ENCODE measurements at regions of chr7 and their contacts with region 1.

Region 1: GRCh38 chr7:123695944-123696677 is 40.4 kb downstream of the LMOD2 start:
- DNase-seq: no peak
- H3K4me3 ChIP-seq: no peak overlapping the region
- H3K27ac ChIP-seq: no peak overlapping the region
- H3K4me1 ChIP-seq: no peaks in the 10 kb centered on the region
- H3K27me3 ChIP-seq: no peaks in the 10 kb centered on the region
- CTCF ChIP-seq: no peak
- POLR2A ChIP-seq: no peak

Region 2: DNA sequence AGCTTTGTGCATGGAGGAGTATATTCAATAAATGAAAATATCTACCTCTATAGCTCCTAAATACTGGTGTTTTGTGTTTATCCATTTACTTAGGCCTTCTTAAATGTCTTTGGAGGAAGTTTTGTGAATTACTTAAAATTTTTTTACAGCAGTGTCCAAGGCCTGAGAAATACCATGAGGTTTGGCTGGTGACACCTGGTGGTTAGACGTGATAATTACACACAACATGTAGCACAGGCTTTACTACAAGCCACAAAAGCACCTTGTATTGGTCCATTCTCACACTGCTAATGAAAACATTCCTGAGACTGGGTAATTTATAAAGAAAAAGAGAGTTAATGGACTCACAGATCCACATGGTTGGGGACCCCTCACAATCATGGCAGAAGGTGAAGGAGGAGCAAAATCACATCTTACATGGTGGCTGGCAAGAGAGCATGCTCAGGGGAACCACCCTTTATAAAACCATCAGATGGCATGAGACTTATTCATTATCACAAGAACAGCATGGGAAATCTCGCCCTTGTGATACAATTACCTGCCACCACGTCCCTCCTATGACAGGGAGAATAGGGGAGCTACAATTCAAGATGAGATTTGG is 169.5 kb after region 1 on chr7:
- intact Hi-C with region 1: loop called (anchors 5 kb)
- DNase-seq: no peak
- H3K4me3 ChIP-seq: no peak overlapping the region
- H3K27ac ChIP-seq: no peak overlapping the region
- H3K4me1 ChIP-seq: no peaks in the 10 kb centered on the region
- H3K27me3 ChIP-seq: no peaks in the 10 kb centered on the region
- CTCF ChIP-seq: peak; percentile 63 to 77 (median 64)
- POLR2A ChIP-seq: no peak

Region 3: GRCh38 chr7:123901044-123901443 is 204.9 kb after region 1 on chr7:
- intact Hi-C with region 1: no loop called
- DNase-seq: no peak
- H3K4me3 ChIP-seq: no peak overlapping the region
- H3K27ac ChIP-seq: no peak overlapping the region
- H3K4me1 ChIP-seq: no peaks in the 10 kb centered on the region
- H3K27me3 ChIP-seq: no peaks in the 10 kb centered on the region
- CTCF ChIP-seq: no peak
- POLR2A ChIP-seq: no peak

Measured in vagina (tissue), 2 donors.